CD4-positive, alpha-beta memory T cell (primary cell): ENCODE measurements at regions of chr13 and their contacts with region 1.

Region 1: DNA sequence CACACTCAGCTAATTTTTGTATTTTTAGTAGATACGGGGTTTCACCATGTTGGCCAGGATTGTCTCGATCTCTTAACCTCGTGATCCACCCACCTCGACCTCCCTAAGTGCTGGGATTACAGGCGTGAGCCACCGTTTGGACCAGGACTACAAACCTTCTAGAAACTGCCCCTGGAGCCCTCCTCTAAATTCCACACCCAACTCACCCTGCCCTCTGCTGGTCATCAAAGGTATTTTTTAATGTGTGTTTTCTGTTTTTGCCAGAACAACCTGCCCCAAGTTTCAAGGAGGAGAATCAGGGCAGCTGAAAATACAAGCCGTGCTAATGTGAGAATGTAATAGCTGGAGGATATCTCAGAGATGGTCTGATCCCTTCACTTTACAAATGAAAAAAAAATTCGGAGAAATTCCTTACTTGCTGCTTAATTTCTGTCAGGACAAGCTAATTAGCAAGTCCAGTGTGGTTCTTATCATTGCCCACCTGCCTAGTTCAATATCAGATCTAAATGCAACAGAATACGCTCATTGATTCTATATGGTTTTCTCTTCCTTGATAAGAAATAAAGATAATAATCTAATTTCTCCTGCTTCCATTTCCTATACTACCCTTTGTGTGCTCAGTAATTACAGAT is 4.1 kb downstream of the ATP8A2 start:
- DNase-seq: peak; percentile 28 to 51 (median 38)
- H3K4me3 ChIP-seq: no peak overlapping the region
- H3K4me3 Mint-ChIP-seq: peak overlapping the region in 1 of 8 donors; percentile 53
- H3K27ac ChIP-seq: no peak overlapping the region
- H3K27ac Mint-ChIP-seq: no peak overlapping the region
- H3K4me1 ChIP-seq: peaks cover 4% of the 10 kb centered on the region
- H3K4me1 Mint-ChIP-seq: peaks cover 7 to 15% (median 10%) of the 10 kb centered on the region in 4 donors
- H3K27me3 ChIP-seq: peaks cover 15% of the 10 kb centered on the region
- H3K27me3 Mint-ChIP-seq: peaks cover 37 to 44% of the 10 kb centered on the region in 2 donors

Region 2: DNA sequence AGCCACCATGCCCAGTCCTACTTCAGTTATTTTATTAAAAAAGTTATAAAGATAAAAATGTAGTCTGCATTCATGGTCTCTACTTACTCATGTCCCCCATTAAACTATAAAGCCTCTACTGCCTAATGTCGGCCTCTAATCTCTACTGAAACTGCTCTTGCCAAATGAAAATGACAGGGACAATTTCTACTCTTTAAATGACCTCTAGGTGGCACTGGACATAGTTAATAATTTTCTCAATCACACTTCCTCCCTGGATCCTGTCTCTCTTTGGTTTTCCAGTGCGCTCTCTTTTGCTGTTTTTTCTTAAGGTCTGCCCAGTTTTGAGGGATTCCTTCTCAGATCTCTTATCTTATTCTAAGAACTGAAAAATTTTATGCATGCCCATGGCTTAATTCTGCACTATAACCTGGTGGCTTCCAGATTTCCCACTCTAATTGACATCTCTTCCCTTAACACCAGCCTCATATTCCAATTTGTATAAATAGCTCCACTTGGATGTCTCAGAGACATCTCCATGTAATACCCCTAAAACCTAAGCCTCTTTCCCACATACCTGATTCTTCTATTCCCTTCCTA is 142.8 kb before region 1 on chr13:
- CTCF ChIA-PET with region 1: interaction called, 29 read pairs
- POLR2A ChIA-PET with region 1: no interaction called
- intact Hi-C with region 1: no loop called
- DNase-seq: peak in 4 of 5 donors; percentile 5 to 25 (median 10)
- H3K4me3 ChIP-seq: no peak overlapping the region
- H3K4me3 Mint-ChIP-seq: no peak overlapping the region
- H3K27ac ChIP-seq: no peak overlapping the region
- H3K27ac Mint-ChIP-seq: peak overlapping the region in 1 of 7 donors; percentile 86
- H3K4me1 ChIP-seq: no peaks in the 10 kb centered on the region
- H3K4me1 Mint-ChIP-seq: peaks cover 0 to 7% (median 6%) of the 10 kb centered on the region in 4 donors
- H3K27me3 ChIP-seq: no peaks in the 10 kb centered on the region
- H3K27me3 Mint-ChIP-seq: peaks cover 4 to 7% of the 10 kb centered on the region in 2 donors

Region 3: DNA sequence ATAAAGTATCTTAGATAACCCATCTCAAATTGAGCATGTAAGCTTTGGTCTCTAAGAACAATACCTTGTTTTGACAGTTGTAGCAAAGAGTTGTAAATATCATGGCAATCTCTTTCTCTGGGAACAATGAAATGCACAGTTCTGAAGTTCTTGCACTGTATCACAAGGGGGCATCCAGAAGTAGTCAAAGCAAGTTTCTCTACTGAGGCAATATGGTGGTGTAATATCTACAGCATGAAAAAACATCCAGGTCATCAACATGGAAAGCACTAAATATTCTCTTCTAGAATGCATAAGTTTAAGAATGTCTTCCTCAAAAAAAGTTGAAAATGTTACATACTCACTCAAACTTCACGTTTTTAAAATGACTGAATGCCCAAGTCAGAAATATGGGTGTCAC is 108.1 kb before region 1 on chr13:
- CTCF ChIA-PET with region 1: interaction called, 6 read pairs
- POLR2A ChIA-PET with region 1: no interaction called
- intact Hi-C with region 1: loop called (anchors 1 kb)
- DNase-seq: peak in 3 of 5 donors; percentile 11 to 21 (median 19)
- H3K4me3 ChIP-seq: no peak overlapping the region
- H3K4me3 Mint-ChIP-seq: no peak overlapping the region
- H3K27ac ChIP-seq: no peak overlapping the region
- H3K27ac Mint-ChIP-seq: peak overlapping the region in 5 of 7 donors; percentile 0 to 51 (median 19)
- H3K4me1 ChIP-seq: no peaks in the 10 kb centered on the region
- H3K4me1 Mint-ChIP-seq: peaks cover 0 to 15% (median 10%) of the 10 kb centered on the region in 4 donors
- H3K27me3 ChIP-seq: no peaks in the 10 kb centered on the region
- H3K27me3 Mint-ChIP-seq: no peaks in the 10 kb centered on the region

Region 4: DNA sequence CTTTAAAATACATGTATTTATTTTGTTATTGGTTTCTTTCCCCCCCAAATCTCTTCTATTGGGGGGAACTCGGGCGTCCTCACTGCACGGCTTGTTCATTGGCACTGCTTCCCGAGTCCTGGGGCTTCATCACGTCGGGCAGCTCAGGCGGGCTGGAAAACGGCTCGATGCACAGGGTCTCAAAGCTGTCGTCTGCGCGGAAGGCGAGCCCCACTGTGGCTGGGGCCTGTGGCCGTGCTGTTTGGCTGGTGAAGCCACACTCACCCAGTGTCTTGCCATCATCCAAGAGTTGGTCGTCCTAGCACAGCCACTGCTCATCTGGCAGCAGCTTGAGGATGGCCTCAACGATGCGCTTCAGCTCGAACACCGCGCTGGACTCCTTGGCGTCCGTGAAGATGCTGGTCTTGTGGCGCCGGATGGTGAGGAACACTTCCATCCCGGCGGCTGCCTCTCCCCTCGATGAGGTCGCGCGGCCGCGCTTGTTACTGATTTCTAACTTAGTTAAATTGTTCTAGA is 10.1 kb before region 1 on chr13:
- CTCF ChIA-PET with region 1: interaction called, 17 read pairs
- POLR2A ChIA-PET with region 1: no interaction called
- intact Hi-C with region 1: no loop called
- DNase-seq: no peak
- H3K4me3 ChIP-seq: no peak overlapping the region
- H3K4me3 Mint-ChIP-seq: no peak overlapping the region
- H3K27ac ChIP-seq: no peak overlapping the region
- H3K27ac Mint-ChIP-seq: no peak overlapping the region
- H3K4me1 ChIP-seq: no peaks in the 10 kb centered on the region
- H3K4me1 Mint-ChIP-seq: no peaks in the 10 kb centered on the region
- H3K27me3 ChIP-seq: no peaks in the 10 kb centered on the region
- H3K27me3 Mint-ChIP-seq: peaks cover 24 to 31% of the 10 kb centered on the region in 2 donors

Region 5: GRCh38 chr13:25699056-25699455 is 323.2 kb after region 1 on chr13:
- CTCF ChIA-PET with region 1: no interaction called
- POLR2A ChIA-PET with region 1: no interaction called
- intact Hi-C with region 1: no loop called
- DNase-seq: no peak
- H3K4me3 ChIP-seq: no peak overlapping the region
- H3K4me3 Mint-ChIP-seq: no peak overlapping the region
- H3K27ac ChIP-seq: no peak overlapping the region
- H3K27ac Mint-ChIP-seq: no peak overlapping the region
- H3K4me1 ChIP-seq: no peaks in the 10 kb centered on the region
- H3K4me1 Mint-ChIP-seq: no peaks in the 10 kb centered on the region
- H3K27me3 ChIP-seq: no peaks in the 10 kb centered on the region
- H3K27me3 Mint-ChIP-seq: peaks cover 4 to 6% of the 10 kb centered on the region in 2 donors